ENCODE measurements at regions of chr19 and their contacts with region 1.

Region 1: GRCh38 chr19:55146078-55146704 is 2.8 kb downstream of the TNNT1 start:
- DNase-seq: no peak
- ATAC-seq: peak; percentile 84
- H3K4me3 ChIP-seq: peak overlapping the region; percentile 47 to 77
- H3K27ac ChIP-seq: no peak overlapping the region; the same call in 1 of the 2 replicates
- H3K4me1 ChIP-seq: peaks cover 17% of the 10 kb centered on the region; the same call in 1 of the 2 replicates
- H3K27me3 ChIP-seq: no peaks in the 10 kb centered on the region
- CTCF ChIP-seq: peak; percentile 99

Region 2: GRCh38 chr19:55005684-55006488 is 140.3 kb before region 1 on chr19:
- CTCF ChIA-PET with region 1: no interaction called
- POLR2A ChIA-PET with region 1: no interaction called
- in situ Hi-C with region 1: no loop called
- intact Hi-C with region 1: no loop called
- DNase-seq: no peak
- ATAC-seq: no peak
- H3K4me3 ChIP-seq: peak overlapping the region in 1 of 2 experiments; percentile 33; a peak in 2 of 4 replicates
- H3K27ac ChIP-seq: no peak overlapping the region
- H3K4me1 ChIP-seq: no peaks in the 10 kb centered on the region
- H3K27me3 ChIP-seq: no peaks in the 10 kb centered on the region
- CTCF ChIP-seq: no peak

Region 3: DNA sequence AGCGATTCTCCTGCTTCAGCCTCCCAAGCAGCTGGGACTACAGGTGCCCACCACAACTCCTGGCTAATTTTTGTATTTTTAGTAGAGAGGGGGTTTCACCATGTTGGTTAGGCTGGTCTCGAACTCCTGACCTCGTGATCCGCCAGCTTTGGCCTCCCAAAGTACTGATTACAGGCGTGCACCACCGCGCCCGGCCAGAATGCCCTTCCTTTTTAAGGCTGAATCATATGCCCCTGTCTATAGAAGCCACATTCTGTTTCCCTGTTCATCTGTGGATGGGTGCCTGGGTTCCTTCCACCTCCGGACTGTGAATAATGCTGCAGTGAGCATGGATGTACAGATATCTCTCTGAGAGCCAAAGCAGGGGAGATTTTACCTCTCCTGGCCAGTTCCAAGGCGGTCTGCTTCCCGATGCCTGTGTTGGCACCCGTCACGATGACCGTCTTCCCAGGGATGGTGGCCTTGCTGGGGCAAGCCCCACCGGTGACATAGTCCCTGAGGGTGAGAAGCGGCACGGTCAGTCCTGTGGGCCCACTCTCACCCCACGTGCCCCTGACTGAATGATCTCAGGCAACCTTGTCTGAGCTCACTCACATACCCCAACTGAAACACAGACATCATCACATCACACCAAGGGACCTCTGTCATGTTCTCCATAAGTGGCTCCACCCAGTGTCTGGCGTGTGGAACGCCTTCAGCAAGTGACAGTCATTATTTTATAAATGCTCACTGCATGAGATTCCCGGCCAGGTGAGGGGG is 87.2 kb before region 1 on chr19:
- CTCF ChIA-PET with region 1: no interaction called
- POLR2A ChIA-PET with region 1: no interaction called
- in situ Hi-C with region 1: no loop called
- intact Hi-C with region 1: no loop called
- DNase-seq: no peak
- ATAC-seq: no peak
- H3K4me3 ChIP-seq: no peak overlapping the region
- H3K27ac ChIP-seq: no peak overlapping the region
- H3K4me1 ChIP-seq: no peaks in the 10 kb centered on the region
- H3K27me3 ChIP-seq: no peaks in the 10 kb centered on the region
- CTCF ChIP-seq: no peak

Region 4: DNA sequence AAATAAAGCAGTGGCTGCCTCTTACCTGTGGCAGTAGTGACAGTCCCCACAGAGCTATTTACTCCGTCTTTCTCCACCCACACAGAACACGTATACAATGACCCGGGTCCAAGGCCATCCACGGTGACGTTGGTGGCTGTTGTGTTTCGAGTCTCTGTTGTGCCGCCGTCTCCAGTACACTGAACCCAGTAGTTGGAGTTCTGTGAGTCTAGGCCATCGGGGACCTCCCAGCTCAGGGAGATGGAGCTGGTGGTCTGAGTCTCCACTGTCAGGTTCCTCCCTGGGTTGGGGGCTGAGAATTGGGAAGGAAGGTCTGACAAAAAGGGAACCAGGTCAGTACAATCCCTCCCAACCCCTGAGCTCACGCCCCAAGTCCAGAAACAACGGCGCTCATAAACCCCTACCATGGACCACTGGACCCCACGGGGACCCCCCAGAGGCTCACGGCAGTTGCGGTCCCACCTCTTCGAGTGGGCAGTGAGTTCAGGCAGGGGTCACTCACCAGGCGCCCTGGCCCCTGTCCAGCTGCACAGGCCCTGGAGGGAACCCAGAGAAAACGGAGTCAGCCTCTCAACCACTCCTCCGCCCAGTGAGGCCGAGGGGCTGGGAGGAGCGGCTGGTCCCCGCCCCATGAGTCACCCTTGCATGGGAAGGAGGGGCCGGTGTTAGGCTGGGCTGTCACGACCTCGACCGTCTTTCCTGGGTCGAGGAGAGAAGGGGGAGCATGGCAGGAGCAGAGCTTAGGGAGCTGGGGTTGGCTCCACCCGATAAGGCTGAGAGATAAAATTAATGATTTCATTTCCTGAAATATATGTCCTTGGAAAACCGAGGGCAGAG is 60.7 kb after region 1 on chr19:
- CTCF ChIA-PET with region 1: interaction called, 7 read pairs
- POLR2A ChIA-PET with region 1: interaction called, 11 read pairs
- in situ Hi-C with region 1: no loop called
- intact Hi-C with region 1: no loop called
- DNase-seq: peak; percentile 65
- ATAC-seq: peak; percentile 88
- H3K4me3 ChIP-seq: peak overlapping the region; percentile 60 to 100
- H3K27ac ChIP-seq: peak overlapping the region; percentile 90
- H3K4me1 ChIP-seq: peaks cover 19% of the 10 kb centered on the region
- H3K27me3 ChIP-seq: no peaks in the 10 kb centered on the region
- CTCF ChIP-seq: no peak

Region 5: GRCh38 chr19:55426042-55426441 is 279.9 kb after region 1 on chr19:
- CTCF ChIA-PET with region 1: interaction called, 7 read pairs
- POLR2A ChIA-PET with region 1: no interaction called
- in situ Hi-C with region 1: no loop called
- intact Hi-C with region 1: loop called (anchors 10 kb)
- DNase-seq: no peak
- ATAC-seq: no peak
- H3K4me3 ChIP-seq: no peak overlapping the region
- H3K27ac ChIP-seq: no peak overlapping the region
- H3K4me1 ChIP-seq: no peaks in the 10 kb centered on the region
- H3K27me3 ChIP-seq: no peaks in the 10 kb centered on the region
- CTCF ChIP-seq: no peak

Region 6: DNA sequence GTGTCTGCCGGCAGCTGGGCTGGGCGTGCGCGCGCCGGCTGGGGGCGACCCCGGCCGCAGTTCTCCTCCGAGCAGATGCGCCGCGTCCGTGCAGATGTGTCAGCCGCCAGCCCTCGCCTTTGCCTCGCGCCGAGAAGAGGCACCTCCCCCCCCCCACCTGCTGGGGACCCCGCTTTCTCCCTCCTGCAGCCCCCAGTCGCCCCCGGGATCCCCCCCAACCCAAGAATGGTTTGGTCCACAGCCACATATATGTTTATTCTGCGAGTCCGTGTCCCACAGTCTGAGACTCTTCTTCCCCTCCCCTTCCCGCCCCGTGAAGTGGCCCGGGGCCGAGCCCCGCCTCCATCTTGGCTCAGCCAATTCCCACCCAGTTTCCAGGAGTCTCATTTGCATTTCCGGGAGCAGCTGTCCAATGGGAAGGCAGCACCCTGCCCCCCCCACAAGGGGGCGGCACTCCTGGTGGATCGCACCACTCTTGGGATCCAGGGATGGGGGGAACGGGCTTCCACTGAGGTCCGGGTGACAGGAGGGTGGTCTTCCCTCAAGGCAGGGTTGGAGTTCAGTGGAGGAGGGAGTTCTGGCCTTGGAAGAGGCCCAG is 306.7 kb after region 1 on chr19:
- CTCF ChIA-PET with region 1: no interaction called
- POLR2A ChIA-PET with region 1: no interaction called
- in situ Hi-C with region 1: no loop called
- intact Hi-C with region 1: no loop called
- DNase-seq: no peak
- ATAC-seq: peak; percentile 55
- H3K4me3 ChIP-seq: no peak overlapping the region
- H3K27ac ChIP-seq: no peak overlapping the region
- H3K4me1 ChIP-seq: peaks cover 3% of the 10 kb centered on the region
- H3K27me3 ChIP-seq: peaks cover 6% of the 10 kb centered on the region
- CTCF ChIP-seq: no peak; the same call in 1 of the 2 replicates

Region 7: GRCh38 chr19:56155124-56155687 is 1009.0 kb after region 1 on chr19:
- CTCF ChIA-PET with region 1: no interaction called
- POLR2A ChIA-PET with region 1: interaction called, 11 read pairs
- in situ Hi-C with region 1: no loop called
- intact Hi-C with region 1: no loop called
- DNase-seq: no peak
- ATAC-seq: peak; percentile 76
- H3K4me3 ChIP-seq: no peak overlapping the region
- H3K27ac ChIP-seq: no peak overlapping the region
- H3K4me1 ChIP-seq: no peaks in the 10 kb centered on the region
- H3K27me3 ChIP-seq: no peaks in the 10 kb centered on the region
- CTCF ChIP-seq: no peak; the same call in 1 of the 2 replicates